ENCODE measurements at regions of chr2 and their contacts with region 1.

Region 1: GRCh38 chr2:30862054-30862651 is 54.9 kb upstream of the CAPN13 start:
- DNase-seq: peak; percentile 83
- H3K4me3 ChIP-seq: peak overlapping the region in 1 of 2 experiments; percentile 43; a peak in 1 of 4 replicates
- H3K27ac ChIP-seq: peak overlapping the region in 1 of 2 experiments; percentile 62; a peak in 2 of 4 replicates
- H3K4me1 ChIP-seq: peaks cover 0 to 30% of the 10 kb centered on the region in 2 experiments; a peak in 2 of 4 replicates
- H3K27me3 ChIP-seq: no peaks in the 10 kb centered on the region
- CTCF ChIP-seq: peak; percentile 65
- EP300 ChIP-seq: no peak
- RAD21 ChIP-seq: peak; percentile 87

Region 2: DNA sequence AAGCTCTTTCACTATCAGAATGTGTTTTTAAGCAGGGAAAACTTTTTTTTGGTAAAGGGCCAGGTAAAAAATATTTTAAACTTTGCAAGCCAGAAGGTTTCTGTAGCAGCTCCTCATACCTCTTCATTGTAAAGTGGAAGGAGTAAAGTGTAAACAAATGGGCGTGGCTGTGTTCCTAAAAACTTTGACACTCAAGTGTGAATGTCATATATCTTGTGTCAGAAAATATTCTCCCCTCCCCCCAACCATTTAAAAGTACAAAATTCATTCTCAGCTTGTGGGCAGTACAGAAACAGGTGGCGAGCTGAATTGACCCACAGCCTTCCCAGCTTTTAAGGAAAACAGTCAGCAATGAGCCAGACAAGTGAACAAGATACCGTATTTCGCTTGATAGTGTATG is 711.4 kb before region 1 on chr2:
- CTCF ChIA-PET with region 1: no interaction called
- POLR2A ChIA-PET with region 1: no interaction called
- DNase-seq: no peak
- H3K4me3 ChIP-seq: no peak overlapping the region
- H3K27ac ChIP-seq: peak overlapping the region in 1 of 2 experiments; percentile 32; a peak in 1 of 4 replicates
- H3K4me1 ChIP-seq: peaks cover 26 to 63% of the 10 kb centered on the region in 2 experiments; a peak in 3 of 4 replicates
- H3K27me3 ChIP-seq: no peaks in the 10 kb centered on the region
- CTCF ChIP-seq: no peak
- EP300 ChIP-seq: no peak
- RAD21 ChIP-seq: no peak

Region 3: GRCh38 chr2:30165050-30165520 is 697.1 kb before region 1 on chr2:
- CTCF ChIA-PET with region 1: interaction called, 26 read pairs
- POLR2A ChIA-PET with region 1: interaction called, 4 read pairs
- DNase-seq: peak; percentile 88
- H3K4me3 ChIP-seq: no peak overlapping the region; a peak in 1 of 4 replicates
- H3K27ac ChIP-seq: no peak overlapping the region
- H3K4me1 ChIP-seq: peaks cover 2 to 9% of the 10 kb centered on the region in 2 experiments; a peak in 3 of 4 replicates
- H3K27me3 ChIP-seq: no peaks in the 10 kb centered on the region
- CTCF ChIP-seq: peak; percentile 99
- EP300 ChIP-seq: peak in 1 of 2 experiments; percentile 26; a peak in 1 of 4 replicates
- RAD21 ChIP-seq: peak; percentile 97

Region 4: DNA sequence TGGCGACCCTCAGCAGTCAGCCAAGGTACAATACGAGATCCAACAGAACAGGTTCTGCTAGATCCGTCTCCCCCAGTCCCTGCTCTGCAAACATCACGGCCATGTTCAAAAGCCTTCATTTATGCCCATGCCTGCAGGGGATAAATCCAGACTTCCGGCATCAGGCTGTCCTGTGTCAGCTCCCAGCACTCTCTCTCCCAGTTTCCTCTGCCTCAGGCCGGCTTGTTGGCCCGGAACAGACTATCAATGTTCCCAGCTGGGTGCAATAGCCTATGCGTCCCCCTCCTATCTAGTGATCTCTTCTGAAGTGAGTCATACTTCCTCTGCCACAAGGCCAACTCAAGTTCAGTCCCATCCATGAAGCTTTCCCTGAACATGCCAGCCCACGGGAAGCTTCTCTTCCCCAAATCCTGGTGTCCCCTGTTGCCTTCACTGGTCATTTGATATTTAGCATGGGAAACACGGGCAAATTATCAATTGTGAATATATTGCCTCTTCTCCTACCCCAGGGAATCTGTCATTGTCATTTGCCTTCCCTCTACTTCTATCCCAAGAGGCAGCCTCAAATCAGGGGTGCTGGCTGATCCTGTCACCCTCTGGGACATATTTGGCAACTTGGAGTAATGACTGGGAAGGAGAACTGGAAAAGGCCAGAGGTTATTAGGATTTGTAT is 106.0 kb before region 1 on chr2:
- CTCF ChIA-PET with region 1: interaction called, 11 read pairs
- POLR2A ChIA-PET with region 1: no interaction called
- DNase-seq: peak; percentile 80
- H3K4me3 ChIP-seq: no peak overlapping the region
- H3K27ac ChIP-seq: peak overlapping the region in 1 of 2 experiments; percentile 81; a peak in 2 of 4 replicates
- H3K4me1 ChIP-seq: peaks cover 0 to 46% of the 10 kb centered on the region in 2 experiments; a peak in 3 of 4 replicates
- H3K27me3 ChIP-seq: no peaks in the 10 kb centered on the region
- CTCF ChIP-seq: no peak
- EP300 ChIP-seq: peak in 1 of 2 experiments; percentile 92; a peak in 2 of 4 replicates
- RAD21 ChIP-seq: peak; percentile 16; the same call in 1 of the 2 replicates

Region 5: GRCh38 chr2:30828586-30828985 is 33.6 kb before region 1 on chr2:
- CTCF ChIA-PET with region 1: interaction called, 20 read pairs
- POLR2A ChIA-PET with region 1: no interaction called
- DNase-seq: no peak
- H3K4me3 ChIP-seq: no peak overlapping the region
- H3K27ac ChIP-seq: no peak overlapping the region
- H3K4me1 ChIP-seq: peaks cover 0 to 2% of the 10 kb centered on the region in 2 experiments; a peak in 1 of 4 replicates
- H3K27me3 ChIP-seq: no peaks in the 10 kb centered on the region
- CTCF ChIP-seq: no peak
- EP300 ChIP-seq: no peak
- RAD21 ChIP-seq: no peak

Region 6: DNA sequence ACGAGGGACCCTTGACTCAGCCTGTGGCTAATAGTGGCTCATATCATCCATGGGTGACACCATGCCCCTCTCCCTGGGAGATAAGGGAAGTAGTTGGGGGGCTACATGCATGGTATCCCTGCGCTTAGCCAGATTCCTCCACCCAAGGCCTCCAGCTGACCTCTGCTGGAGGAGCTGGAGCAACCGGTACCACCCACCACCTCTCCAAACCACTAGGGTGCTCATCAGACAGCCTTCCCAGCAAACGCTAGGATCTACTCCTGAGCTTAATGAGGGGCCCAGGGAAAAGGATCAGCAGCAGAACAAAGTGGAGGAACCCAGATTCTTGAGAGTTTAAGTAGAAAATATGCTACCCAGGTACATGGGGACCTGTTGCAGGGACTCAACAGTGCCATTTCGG is 21.0 kb after region 1 on chr2:
- CTCF ChIA-PET with region 1: interaction called, 23 read pairs
- POLR2A ChIA-PET with region 1: no interaction called
- DNase-seq: no peak
- H3K4me3 ChIP-seq: no peak overlapping the region
- H3K27ac ChIP-seq: no peak overlapping the region; a peak in 1 of 4 replicates
- H3K4me1 ChIP-seq: peaks cover 0 to 19% of the 10 kb centered on the region in 2 experiments; a peak in 1 of 4 replicates
- H3K27me3 ChIP-seq: no peaks in the 10 kb centered on the region
- CTCF ChIP-seq: no peak
- EP300 ChIP-seq: no peak
- RAD21 ChIP-seq: no peak; the same call in 1 of the 2 replicates

Region 7: DNA sequence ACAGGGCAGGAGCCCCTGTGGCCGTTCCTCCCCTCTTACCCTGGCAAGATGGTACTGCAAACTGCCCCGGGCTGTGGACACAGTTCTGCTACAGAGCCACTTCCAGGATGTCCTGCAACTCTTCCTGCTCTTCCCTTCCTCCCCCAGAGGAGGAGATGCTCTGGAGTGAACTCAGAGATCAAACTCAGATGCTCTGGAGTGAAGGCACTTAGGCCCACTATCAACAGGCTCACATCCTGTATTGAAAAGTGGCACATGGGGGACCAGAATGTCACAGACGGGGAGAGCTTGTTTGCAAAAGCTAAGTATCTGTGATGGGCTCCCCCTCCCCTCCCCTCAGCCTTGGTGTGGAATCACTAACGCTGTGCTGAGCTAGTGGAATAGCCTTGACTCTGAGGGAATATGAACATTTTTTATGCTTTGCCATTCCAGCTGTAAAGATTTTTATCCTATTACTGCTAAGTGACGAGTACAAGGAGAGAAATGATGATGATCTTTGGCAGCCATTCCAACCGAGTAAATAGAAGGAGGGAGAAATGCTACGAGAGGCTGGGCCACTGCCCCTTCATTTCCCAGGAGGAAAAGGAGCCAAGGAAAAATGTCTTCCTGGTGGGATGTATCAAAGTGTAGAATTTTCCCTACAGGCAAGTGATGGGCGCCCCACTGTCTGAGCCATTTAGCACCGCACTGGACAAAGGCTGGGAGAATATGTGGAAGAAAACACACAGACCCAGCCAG is 123.5 kb after region 1 on chr2:
- CTCF ChIA-PET with region 1: interaction called, 17 read pairs
- POLR2A ChIA-PET with region 1: no interaction called
- DNase-seq: peak; percentile 75
- H3K4me3 ChIP-seq: no peak overlapping the region
- H3K27ac ChIP-seq: peak overlapping the region in 1 of 2 experiments; percentile 96; a peak in 2 of 4 replicates
- H3K4me1 ChIP-seq: peaks cover 0 to 80% of the 10 kb centered on the region in 2 experiments; a peak in 2 of 4 replicates
- H3K27me3 ChIP-seq: no peaks in the 10 kb centered on the region
- CTCF ChIP-seq: no peak
- EP300 ChIP-seq: no peak
- RAD21 ChIP-seq: 0 out of 2 replicates have a peak, but pooled peaks have one; percentile 15

Region 8: DNA sequence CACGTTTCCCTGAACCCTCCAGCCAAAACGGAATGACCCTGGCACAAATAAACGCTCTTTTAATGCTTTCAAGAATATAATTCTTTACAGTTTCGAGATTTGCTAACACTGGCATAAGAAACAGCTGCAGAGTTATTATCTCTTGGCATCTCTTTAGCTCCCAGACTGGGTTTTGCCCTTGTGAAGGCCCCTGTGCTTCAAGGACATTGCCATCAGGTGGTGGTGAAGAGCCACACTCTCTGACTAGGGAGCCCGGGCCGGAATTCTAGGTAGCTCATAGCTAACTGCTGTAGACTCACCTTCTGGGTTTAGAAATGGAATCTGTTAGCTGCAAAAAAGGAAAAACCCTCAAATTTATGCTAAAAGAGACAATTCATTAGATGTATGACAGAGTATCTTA is 289.3 kb after region 1 on chr2:
- CTCF ChIA-PET with region 1: interaction called, 18 read pairs
- POLR2A ChIA-PET with region 1: no interaction called
- DNase-seq: peak; percentile 40
- H3K4me3 ChIP-seq: no peak overlapping the region
- H3K27ac ChIP-seq: no peak overlapping the region
- H3K4me1 ChIP-seq: no peaks in the 10 kb centered on the region
- H3K27me3 ChIP-seq: 0 out of 2 replicates have a peak, but pooled peaks cover 5% of the 10 kb centered on the region
- CTCF ChIP-seq: 0 out of 2 replicates have a peak, but pooled peaks have one; percentile 19
- EP300 ChIP-seq: no peak
- RAD21 ChIP-seq: peak; percentile 39

Measured in SK-N-SH (cell line).